Psoas muscle (tissue), 8 donors: ENCODE measurements at regions of chr10 and their contacts with region 1.

Region 1: GRCh38 chr10:86971232-86971991 is 3.1 kb downstream of the ADIRF start:
- DNase-seq: peak; percentile 94 to 96
- ATAC-seq: peak; percentile 84 to 89 (median 86)
- H3K4me3 ChIP-seq: peak overlapping the region; percentile 71
- H3K27ac ChIP-seq: peak overlapping the region; percentile 92
- H3K4me1 ChIP-seq: peaks cover 31% of the 10 kb centered on the region
- H3K27me3 ChIP-seq: no peaks in the 10 kb centered on the region
- CTCF ChIP-seq: peak; percentile 12

Region 2: DNA sequence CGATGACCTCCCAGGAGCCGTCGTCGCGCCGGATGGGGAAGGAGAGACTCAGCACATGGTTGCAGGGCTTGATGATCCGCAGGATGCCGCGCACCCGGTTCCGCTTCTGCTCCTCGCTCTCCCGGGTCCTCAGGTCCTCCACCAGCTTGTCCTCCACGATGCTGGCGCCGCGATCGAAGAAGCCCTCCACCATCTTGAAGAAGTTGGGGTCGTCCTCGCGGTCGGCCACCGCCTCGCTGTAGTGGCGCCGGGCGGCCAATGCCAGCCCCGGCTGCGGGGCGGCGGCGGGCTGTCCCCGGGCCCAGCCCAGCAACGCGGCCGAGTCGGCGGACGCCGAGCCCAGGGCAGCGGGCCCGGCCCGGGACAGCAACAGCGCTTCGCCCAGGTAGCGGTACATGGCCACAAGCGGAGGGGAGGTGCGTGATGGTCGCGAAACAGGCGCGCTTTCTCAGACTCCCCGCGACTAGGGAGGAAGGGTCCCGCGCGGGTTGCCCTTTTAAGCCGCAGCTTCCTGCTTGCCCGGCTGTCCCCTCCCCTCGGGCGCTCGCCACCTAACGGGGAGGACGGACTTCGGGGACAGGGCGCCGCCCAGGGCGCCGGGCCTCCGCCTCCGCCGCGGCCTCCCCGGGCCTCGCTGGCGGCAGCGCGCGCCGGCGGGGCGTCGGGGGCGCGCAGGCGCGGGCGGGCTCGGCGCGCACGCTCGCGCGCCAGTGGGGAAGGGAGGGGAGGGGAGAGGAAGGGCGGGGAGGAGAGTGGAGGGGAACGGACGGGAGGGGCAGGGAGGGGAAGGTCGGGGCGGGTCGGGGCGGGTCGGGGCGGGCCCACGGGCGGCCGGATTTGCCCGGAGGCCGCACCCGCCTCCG is 123.2 kb after region 1 on chr10 and contains the starts of genes GLUD1 and SHLD2:
- intact Hi-C with region 1: loop called (anchors 10 kb)
- DNase-seq: peak; percentile 93 to 96
- ATAC-seq: peak; percentile 82 to 84 (median 83)
- H3K4me3 ChIP-seq: peak within 1 kb of the TSS; percentile 77
- H3K27ac ChIP-seq: peak within 1 kb of the TSS; percentile 98
- H3K4me1 ChIP-seq: peaks cover 28% of the 10 kb centered on the region
- H3K27me3 ChIP-seq: no peaks in the 10 kb centered on the region
- CTCF ChIP-seq: no peak
- total RNA-seq, gene GLUD1: 54.2 to 70.8 (median 58.7) TPM
- total RNA-seq, gene SHLD2: 7.9 to 14.5 (median 12.5) TPM